Mammary epithelial cell (primary cell): ENCODE measurements at regions of chr10 and their contacts with region 1.

Region 1: GRCh38 chr10:107616463-107617410 is 452.2 kb upstream of the SORCS1 start:
- DNase-seq: peak; percentile 87
- H3K4me3 ChIP-seq: no peak overlapping the region
- H3K27ac ChIP-seq: no peak overlapping the region
- H3K4me1 ChIP-seq: peaks cover 14% of the 10 kb centered on the region
- H3K27me3 ChIP-seq: no peaks in the 10 kb centered on the region
- CTCF ChIP-seq: no peak

Region 2: GRCh38 chr10:107496594-107496993 is 120.1 kb before region 1 on chr10:
- CTCF ChIA-PET with region 1: no interaction called
- dilution Hi-C with region 1: no loop called
- in situ Hi-C with region 1: no loop called
- intact Hi-C with region 1: no loop called
- DNase-seq: no peak
- H3K4me3 ChIP-seq: no peak overlapping the region
- H3K27ac ChIP-seq: no peak overlapping the region
- H3K4me1 ChIP-seq: no peaks in the 10 kb centered on the region
- H3K27me3 ChIP-seq: no peaks in the 10 kb centered on the region
- CTCF ChIP-seq: no peak

Region 3: GRCh38 chr10:107517811-107518210 is 98.9 kb before region 1 on chr10:
- CTCF ChIA-PET with region 1: no interaction called
- dilution Hi-C with region 1: no loop called
- in situ Hi-C with region 1: no loop called
- intact Hi-C with region 1: no loop called
- DNase-seq: no peak
- H3K4me3 ChIP-seq: no peak overlapping the region
- H3K27ac ChIP-seq: no peak overlapping the region
- H3K4me1 ChIP-seq: no peaks in the 10 kb centered on the region
- H3K27me3 ChIP-seq: no peaks in the 10 kb centered on the region
- CTCF ChIP-seq: no peak

Region 4: DNA sequence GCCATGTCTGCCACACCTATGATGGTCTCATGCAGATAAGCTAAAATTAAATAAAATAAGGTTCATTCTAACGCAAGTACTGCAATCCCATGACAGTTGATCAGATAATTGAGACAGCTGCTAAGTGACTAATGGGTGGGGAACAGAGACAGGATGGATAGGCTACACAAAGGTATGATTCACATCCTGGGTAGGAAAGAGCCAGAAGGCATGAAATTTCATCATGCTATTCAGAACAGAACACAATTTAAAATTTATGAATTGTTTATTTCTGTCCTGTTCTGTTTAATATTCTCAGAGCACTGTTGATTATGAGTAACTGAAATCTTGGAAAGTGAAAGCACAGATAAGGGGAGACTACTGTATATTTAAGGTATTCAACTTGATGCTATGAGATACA is 70.5 kb before region 1 on chr10:
- CTCF ChIA-PET with region 1: no interaction called
- dilution Hi-C with region 1: no loop called
- in situ Hi-C with region 1: no loop called
- intact Hi-C with region 1: loop called (anchors 2 kb)
- DNase-seq: peak; percentile 92
- H3K4me3 ChIP-seq: peak overlapping the region; percentile 26 to 39 (median 36)
- H3K27ac ChIP-seq: peak overlapping the region; percentile 74
- H3K4me1 ChIP-seq: peaks cover 19% of the 10 kb centered on the region
- H3K27me3 ChIP-seq: no peaks in the 10 kb centered on the region
- CTCF ChIP-seq: no peak

Region 5: GRCh38 chr10:107733328-107734130 is 116.8 kb after region 1 on chr10:
- CTCF ChIA-PET with region 1: no interaction called
- dilution Hi-C with region 1: no loop called
- in situ Hi-C with region 1: no loop called
- intact Hi-C with region 1: loop called (anchors 10 kb)
- DNase-seq: peak; percentile 77
- H3K4me3 ChIP-seq: no peak overlapping the region
- H3K27ac ChIP-seq: peak overlapping the region; percentile 29
- H3K4me1 ChIP-seq: peaks cover 34% of the 10 kb centered on the region
- H3K27me3 ChIP-seq: no peaks in the 10 kb centered on the region
- CTCF ChIP-seq: no peak